HepG2 (cell line): ENCODE measurements at regions of chr1 and their contacts with region 1.

Region 1: DNA sequence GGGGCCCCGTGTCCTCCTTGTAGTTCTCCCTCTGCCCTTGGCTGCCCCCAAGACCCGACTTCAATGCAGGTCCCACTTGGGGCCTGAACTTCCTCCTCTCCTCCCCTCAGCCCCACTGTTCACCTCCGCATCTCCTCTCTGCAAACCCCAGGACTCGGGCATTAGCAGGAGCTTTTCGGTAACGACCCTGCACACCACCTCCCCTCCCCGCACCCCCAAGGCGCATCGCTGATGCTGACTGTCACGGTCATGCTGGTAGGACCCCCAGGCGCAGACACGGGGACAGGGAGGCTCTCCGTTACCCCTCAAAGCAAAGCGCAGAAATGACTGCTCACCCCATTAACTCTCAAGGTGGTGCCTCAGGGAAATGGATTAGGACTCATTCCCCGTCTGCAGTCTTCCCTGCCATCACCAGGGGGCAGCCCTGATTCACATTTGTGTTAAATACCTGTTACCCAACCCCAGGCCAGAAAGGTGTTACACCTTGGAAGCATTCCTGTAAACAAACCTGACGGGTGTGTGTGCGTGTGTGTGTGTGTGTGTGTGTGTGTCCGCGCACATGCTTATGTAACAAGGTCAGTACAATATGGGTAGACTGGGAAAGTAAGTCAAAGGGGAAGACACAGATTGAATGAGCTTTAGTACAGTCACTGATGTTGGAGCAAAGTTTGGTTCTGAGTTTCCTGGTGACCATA is 6.4 kb upstream of the GUCA2B start:
- DNase-seq: peak; percentile 76
- ATAC-seq: peak; percentile 88
- H3K4me3 ChIP-seq: no peak overlapping the region
- H3K27ac ChIP-seq: no peak overlapping the region
- H3K4me1 ChIP-seq: peaks cover 8% of the 10 kb centered on the region; the same call in 1 of the 2 replicates
- H3K27me3 ChIP-seq: peaks cover 3 to 45% of the 10 kb centered on the region in 2 experiments; a peak in 3 of 5 replicates
- CTCF ChIP-seq: peak; percentile 95
- EP300 ChIP-seq: no peak
- POLR2A ChIP-seq: no peak
- RAD21 ChIP-seq: peak; percentile 80

Region 2: GRCh38 chr1:42173155-42173933 is 26.6 kb after region 1 on chr1:
- CTCF ChIA-PET with region 1: interaction called, 31 read pairs
- POLR2A ChIA-PET with region 1: no interaction called
- in situ Hi-C with region 1: no loop called
- intact Hi-C with region 1: loop called (anchors 1 kb)
- DNase-seq: peak; percentile 18
- ATAC-seq: peak; percentile 60
- H3K4me3 ChIP-seq: no peak overlapping the region
- H3K27ac ChIP-seq: no peak overlapping the region
- H3K4me1 ChIP-seq: peaks cover 14% of the 10 kb centered on the region
- H3K27me3 ChIP-seq: no peaks in the 10 kb centered on the region
- CTCF ChIP-seq: peak; percentile 86
- EP300 ChIP-seq: no peak
- POLR2A ChIP-seq: no peak
- RAD21 ChIP-seq: no peak

Region 3: DNA sequence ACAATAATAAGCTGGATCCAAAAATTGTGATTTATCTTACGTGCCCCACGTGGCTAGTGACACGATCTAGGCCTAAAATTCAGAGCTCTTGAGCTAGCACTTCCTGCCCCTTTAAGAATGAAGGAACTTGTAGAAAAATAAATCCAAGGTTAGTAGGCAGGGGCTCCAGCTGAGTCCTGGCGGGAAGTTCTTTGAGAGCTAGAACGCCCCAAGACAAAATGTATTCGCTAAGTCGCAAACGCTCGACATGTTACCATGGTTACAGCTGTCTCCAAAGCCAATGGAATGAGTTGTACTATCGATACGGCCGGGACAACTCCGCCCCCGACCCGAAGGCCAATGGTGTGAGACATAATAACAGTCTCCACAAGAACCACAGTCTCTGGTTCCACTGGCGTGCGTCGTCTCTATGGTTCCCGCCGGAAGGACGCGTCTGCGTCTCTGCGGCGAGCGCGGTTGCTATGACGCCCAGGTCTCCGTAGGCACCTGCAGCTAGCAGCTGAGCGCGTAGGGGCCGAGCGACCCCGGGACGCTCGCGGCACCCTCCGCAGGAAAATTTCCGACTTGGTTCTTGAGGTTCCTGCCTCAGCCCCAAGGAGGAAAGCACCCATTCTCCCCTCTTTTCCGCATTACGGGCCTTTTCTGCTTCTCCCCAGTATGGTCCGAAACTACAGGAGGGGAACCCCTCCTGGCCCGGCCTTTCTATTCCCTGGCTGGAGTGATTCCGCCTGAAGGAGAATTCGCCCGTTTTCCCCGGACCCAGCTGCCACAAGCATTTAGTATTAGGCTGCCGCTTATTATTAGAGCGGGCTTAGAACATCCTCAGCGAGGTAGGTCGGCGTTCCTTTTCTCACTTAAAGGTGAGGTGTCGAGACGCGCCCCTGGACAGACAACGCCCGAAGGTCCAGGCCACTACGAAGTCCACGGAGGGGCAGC is 316.3 kb after region 1 on chr1 and contains the start of gene CCDC30:
- CTCF ChIA-PET with region 1: no interaction called
- POLR2A ChIA-PET with region 1: no interaction called
- in situ Hi-C with region 1: no loop called
- intact Hi-C with region 1: no loop called
- DNase-seq: peak; percentile 97
- ATAC-seq: peak; percentile 99
- H3K4me3 ChIP-seq: peak within 1 kb of the TSS; percentile 65 to 85 (median 70)
- H3K27ac ChIP-seq: peak within 1 kb of the TSS; percentile 54
- H3K4me1 ChIP-seq: peaks cover 43% of the 10 kb centered on the region
- H3K27me3 ChIP-seq: no peaks in the 10 kb centered on the region
- CTCF ChIP-seq: no peak
- EP300 ChIP-seq: no peak
- POLR2A ChIP-seq: 0 out of 4 replicates have a peak, but pooled peaks of 1 of the 2 experiments have one; percentile 31
- RAD21 ChIP-seq: no peak
- total RNA-seq, gene CCDC30: 0.77 and 1.2 TPM in 2 replicates